ENCODE measurements at regions of chr22 and their contacts with region 1.

Region 1: GRCh38 chr22:20156611-20157429 is 6.0 kb upstream of the CCDC188 start:
- DNase-seq: peak; percentile 79 to 90 (median 83)
- H3K4me3 ChIP-seq: no peak overlapping the region
- H3K4me3 Mint-ChIP-seq: no peak overlapping the region
- H3K27ac ChIP-seq: no peak overlapping the region
- H3K27ac Mint-ChIP-seq: peak overlapping the region in 2 of 8 donors; percentile 19 to 36
- H3K4me1 ChIP-seq: no peaks in the 10 kb centered on the region
- H3K4me1 Mint-ChIP-seq: peaks cover 0 to 4% (median 2%) of the 10 kb centered on the region in 3 donors
- H3K27me3 ChIP-seq: peaks cover 17% of the 10 kb centered on the region
- H3K27me3 Mint-ChIP-seq: peaks cover 0 to 4% of the 10 kb centered on the region in 2 donors

Region 2: GRCh38 chr22:20116951-20117645 is 39.7 kb before region 1 on chr22 and contains the start of gene TRMT2A:
- CTCF ChIA-PET with region 1: no interaction called
- POLR2A ChIA-PET with region 1: no interaction called
- DNase-seq: peak; percentile 93 to 97 (median 96)
- H3K4me3 ChIP-seq: peak within 1 kb of the TSS; percentile 86
- H3K4me3 Mint-ChIP-seq: peak within 1 kb of the TSS; percentile 85 to 96 (median 91)
- H3K27ac ChIP-seq: peak within 1 kb of the TSS; percentile 95
- H3K27ac Mint-ChIP-seq: peak within 1 kb of the TSS; percentile 86 to 98 (median 92)
- H3K4me1 ChIP-seq: peaks cover 36% of the 10 kb centered on the region
- H3K4me1 Mint-ChIP-seq: peaks cover 29 to 59% (median 31%) of the 10 kb centered on the region in 3 donors
- H3K27me3 ChIP-seq: no peaks in the 10 kb centered on the region
- H3K27me3 Mint-ChIP-seq: no peaks in the 10 kb centered on the region
- total RNA-seq, gene TRMT2A: 108 to 121 TPM

Region 3: GRCh38 chr22:20238536-20238900 is 81.7 kb after region 1 on chr22:
- CTCF ChIA-PET with region 1: interaction called, 10 read pairs
- POLR2A ChIA-PET with region 1: no interaction called
- DNase-seq: peak; percentile 23 to 75 (median 56)
- H3K4me3 ChIP-seq: peak overlapping the region; percentile 8
- H3K4me3 Mint-ChIP-seq: peak overlapping the region in 6 of 7 donors; percentile 29 to 70 (median 52)
- H3K27ac ChIP-seq: no peak overlapping the region
- H3K27ac Mint-ChIP-seq: peak overlapping the region; percentile 77 to 90 (median 84)
- H3K4me1 ChIP-seq: peaks cover 72% of the 10 kb centered on the region
- H3K4me1 Mint-ChIP-seq: peaks cover 12 to 64% (median 23%) of the 10 kb centered on the region in 3 donors
- H3K27me3 ChIP-seq: peaks cover 4% of the 10 kb centered on the region
- H3K27me3 Mint-ChIP-seq: no peaks in the 10 kb centered on the region

Region 4: DNA sequence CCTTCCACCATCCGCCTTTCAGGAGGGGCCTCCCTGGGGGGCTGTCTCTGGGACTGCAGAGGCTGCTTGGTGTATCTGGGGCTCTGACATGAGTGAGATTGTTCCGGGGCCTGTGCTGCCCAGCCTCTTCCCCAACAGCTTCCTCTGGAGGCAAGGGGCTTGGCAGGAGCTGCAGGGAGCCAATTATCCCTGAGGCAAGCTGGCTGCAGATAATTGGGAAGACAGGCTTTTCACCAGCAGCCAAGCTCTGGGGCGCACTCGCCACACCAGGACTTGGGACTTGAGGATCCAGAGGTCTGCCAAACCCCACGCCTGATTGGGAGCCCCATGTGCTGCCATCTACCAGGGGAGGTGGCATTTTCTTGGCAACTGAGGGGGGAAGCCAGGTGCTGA is 126.8 kb after region 1 on chr22:
- CTCF ChIA-PET with region 1: interaction called, 23 read pairs
- POLR2A ChIA-PET with region 1: no interaction called
- DNase-seq: no peak
- H3K4me3 ChIP-seq: no peak overlapping the region
- H3K4me3 Mint-ChIP-seq: no peak overlapping the region
- H3K27ac ChIP-seq: no peak overlapping the region
- H3K27ac Mint-ChIP-seq: no peak overlapping the region
- H3K4me1 ChIP-seq: no peaks in the 10 kb centered on the region
- H3K4me1 Mint-ChIP-seq: peaks cover 0 to 3% (median 2%) of the 10 kb centered on the region in 3 donors
- H3K27me3 ChIP-seq: no peaks in the 10 kb centered on the region
- H3K27me3 Mint-ChIP-seq: peaks cover 2 to 3% of the 10 kb centered on the region in 2 donors